ENCODE measurements at regions of chr19 and their contacts with region 1.

Region 1: GRCh38 chr19:46788262-46788967 is at the start of gene SLC1A5:
- DNase-seq: peak; percentile 94
- H3K4me3 ChIP-seq: peak within 1 kb of the TSS; percentile 85 to 89 (median 87)
- H3K27ac ChIP-seq: peak within 1 kb of the TSS; percentile 81
- H3K4me1 ChIP-seq: peaks cover 36% of the 10 kb centered on the region
- H3K27me3 ChIP-seq: no peaks in the 10 kb centered on the region
- CTCF ChIP-seq: no peak
- total RNA-seq, gene SLC1A5: 328 to 370 TPM

Region 2: DNA sequence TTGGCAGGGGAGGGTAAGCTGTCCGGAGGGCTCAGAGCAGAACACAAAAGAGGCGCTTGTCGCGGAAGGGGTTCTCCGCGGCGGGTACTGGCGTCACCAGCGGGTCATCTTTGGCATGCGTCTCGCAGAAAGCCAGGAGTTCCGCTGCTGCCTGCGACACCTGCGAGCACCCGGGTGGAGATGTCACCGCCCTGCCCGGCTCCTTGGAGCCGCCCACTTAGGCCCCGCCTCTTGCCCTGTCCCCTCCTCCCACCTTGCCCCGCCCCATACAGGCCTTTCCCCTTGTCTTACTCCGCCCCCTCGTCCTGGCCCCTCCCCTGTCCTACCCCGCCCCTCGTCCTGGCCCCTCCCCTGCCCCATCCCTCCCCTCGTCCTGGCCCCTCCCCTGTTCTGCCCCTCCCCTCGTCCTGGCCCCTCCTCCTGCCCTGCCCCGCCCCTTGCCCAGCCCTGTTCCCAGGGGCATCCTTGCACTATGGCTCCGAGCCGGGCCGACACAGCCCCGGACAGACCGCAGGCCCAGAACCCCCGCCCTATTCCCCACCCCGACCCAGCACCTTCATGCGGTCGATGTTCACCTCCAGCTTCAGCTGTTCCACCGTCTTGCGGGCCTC is 154.3 kb before region 1 on chr19:
- CTCF ChIA-PET with region 1: no interaction called
- dilution Hi-C with region 1: no loop called
- in situ Hi-C with region 1: no loop called
- intact Hi-C with region 1: no loop called
- DNase-seq: peak; percentile 85
- H3K4me3 ChIP-seq: peak overlapping the region; percentile 29 to 51 (median 39)
- H3K27ac ChIP-seq: no peak overlapping the region
- H3K4me1 ChIP-seq: peaks cover 31% of the 10 kb centered on the region
- H3K27me3 ChIP-seq: peaks cover 3% of the 10 kb centered on the region
- CTCF ChIP-seq: no peak

Region 3: DNA sequence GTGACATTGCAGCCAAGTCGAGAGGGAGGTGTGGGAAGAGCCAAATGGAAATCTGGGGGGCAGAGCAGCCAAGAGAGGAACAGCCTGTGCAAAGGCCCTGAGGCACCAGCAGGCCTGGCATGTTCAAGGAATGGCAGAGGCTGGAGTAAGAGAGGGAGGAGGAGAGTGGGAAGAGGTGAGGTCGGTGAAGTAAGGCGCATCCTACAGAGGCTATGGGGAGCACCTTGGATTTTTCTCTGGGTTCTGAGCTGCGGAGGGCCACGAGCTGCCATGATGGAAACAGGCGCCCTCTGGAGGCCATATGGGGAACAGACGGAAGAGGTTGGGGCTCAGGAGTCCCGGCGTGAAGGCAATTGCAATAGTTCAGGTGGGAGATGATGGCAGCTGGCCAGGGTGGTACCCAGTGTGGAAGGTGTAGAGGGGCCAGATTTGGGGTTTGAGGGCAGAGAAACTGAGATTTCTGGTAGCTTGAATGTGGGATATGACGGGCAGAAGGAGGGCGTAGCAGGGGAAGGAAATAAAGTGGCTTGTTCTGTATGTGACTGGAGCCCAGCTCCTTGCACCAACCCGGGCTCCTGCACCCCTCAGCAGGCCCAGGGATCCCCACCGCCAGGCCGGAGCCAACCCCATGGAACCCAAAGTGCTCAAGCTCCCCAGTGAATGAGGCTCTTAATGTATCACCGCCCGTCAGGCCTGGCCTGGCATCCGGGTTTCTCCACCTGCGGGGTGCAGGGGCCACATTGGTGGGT is 21.7 kb before region 1 on chr19:
- CTCF ChIA-PET with region 1: no interaction called
- dilution Hi-C with region 1: no loop called
- in situ Hi-C with region 1: no loop called
- intact Hi-C with region 1: loop called (anchors 1 kb)
- DNase-seq: no peak
- H3K4me3 ChIP-seq: no peak overlapping the region
- H3K27ac ChIP-seq: no peak overlapping the region
- H3K4me1 ChIP-seq: peaks cover 9% of the 10 kb centered on the region
- H3K27me3 ChIP-seq: no peaks in the 10 kb centered on the region
- CTCF ChIP-seq: peak; percentile 65 to 85

Region 4: DNA sequence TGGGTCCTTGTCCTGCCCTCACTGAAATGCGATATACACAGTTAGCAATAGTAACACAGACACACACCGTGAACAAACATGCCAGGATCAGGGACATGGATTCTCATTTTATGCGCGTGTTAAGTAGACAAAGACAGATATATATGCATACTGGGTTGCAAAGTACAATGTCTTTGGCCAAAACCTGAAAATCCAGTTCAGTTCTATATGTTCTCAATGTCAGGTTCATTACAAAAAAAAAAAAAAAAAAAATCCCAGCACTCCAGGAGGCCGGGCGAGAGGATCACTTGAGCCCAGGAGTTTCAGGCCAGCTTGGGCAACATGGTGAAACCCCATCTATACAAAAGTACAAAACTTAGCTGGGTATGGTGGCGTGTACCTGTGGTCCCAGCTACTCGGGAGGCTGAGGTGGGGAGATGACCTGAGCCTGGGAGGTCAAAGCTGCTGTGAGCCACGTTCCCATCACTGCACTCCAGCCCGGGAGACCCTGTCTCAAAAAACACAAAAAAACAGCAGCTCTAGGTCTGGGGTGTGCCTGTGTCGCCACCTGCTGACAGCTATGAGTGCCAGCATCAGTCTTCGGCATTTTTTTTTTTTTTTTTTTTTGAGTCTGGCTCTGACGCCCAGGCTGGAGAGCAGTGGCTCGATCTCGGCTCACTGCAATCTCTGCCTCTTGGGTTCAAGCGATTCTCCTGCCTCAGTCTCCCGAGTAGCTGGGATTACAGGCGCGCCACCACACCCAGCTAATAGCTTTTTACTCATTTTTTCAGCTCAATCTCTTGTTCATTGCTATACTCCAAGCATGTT is 51.9 kb after region 1 on chr19:
- CTCF ChIA-PET with region 1: interaction called, 5 read pairs
- dilution Hi-C with region 1: no loop called
- in situ Hi-C with region 1: loop called in 1 of 2 experiments (anchors 5 kb)
- intact Hi-C with region 1: loop called (anchors 1 kb)
- DNase-seq: peak; percentile 49
- H3K4me3 ChIP-seq: no peak overlapping the region
- H3K27ac ChIP-seq: no peak overlapping the region
- H3K4me1 ChIP-seq: peaks cover 10% of the 10 kb centered on the region
- H3K27me3 ChIP-seq: no peaks in the 10 kb centered on the region
- CTCF ChIP-seq: peak; percentile 77 to 89

Region 5: DNA sequence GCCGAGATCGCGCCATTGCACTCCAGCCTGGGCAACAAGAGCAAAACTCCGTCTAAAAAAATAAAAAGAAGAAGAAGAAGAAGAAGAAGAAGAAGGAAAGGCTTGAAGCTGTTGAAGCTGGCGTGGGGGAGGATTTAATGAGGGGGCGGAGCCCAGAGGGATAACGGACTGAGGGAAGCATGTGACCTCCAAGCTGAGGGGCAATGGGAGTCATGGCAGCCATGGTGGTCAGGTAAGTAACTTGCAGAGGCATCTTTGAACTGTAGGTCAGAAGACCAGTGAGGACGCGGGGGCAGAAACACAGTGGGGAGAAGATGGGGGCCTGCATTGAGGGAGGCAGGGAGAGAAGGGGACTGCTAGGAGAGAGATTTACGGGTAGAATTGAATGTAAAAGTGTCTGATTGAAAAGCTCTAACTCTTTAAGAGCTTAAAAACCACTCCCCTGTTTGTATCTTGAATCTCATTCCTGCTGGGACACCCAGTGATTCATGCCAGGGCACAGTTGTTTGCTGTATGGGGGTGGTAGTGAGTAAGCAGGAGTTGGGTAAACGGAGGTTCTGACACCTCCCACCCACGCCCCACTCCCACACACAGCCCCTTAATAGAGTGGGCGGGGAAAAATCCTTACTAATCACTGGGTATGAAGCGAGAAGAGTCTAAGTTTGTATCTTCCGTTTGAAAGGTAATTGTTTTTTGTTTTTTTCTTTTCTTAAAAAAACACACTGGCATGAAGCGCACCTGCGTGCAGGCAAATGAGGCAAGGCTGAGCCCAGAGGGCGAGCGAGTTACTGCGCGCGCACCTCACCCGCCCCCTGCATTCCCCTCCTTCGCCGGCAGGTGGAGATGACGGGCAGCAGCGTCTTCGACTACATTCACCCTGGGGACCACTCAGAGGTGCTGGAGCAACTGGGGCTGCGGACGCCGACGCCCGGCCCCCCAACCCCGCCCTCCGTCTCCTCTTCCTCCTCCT is 247.0 kb after region 1 on chr19:
- CTCF ChIA-PET with region 1: no interaction called
- dilution Hi-C with region 1: no loop called
- in situ Hi-C with region 1: no loop called
- intact Hi-C with region 1: loop called (anchors 5 kb)
- DNase-seq: peak; percentile 90
- H3K4me3 ChIP-seq: peak overlapping the region; percentile 47 to 79 (median 53)
- H3K27ac ChIP-seq: peak overlapping the region; percentile 68
- H3K4me1 ChIP-seq: peaks cover 14% of the 10 kb centered on the region
- H3K27me3 ChIP-seq: no peaks in the 10 kb centered on the region
- CTCF ChIP-seq: peak; percentile 80 to 94

Region 6: GRCh38 chr19:47256688-47257443 is 468.5 kb after region 1 on chr19:
- CTCF ChIA-PET with region 1: no interaction called
- dilution Hi-C with region 1: no loop called
- in situ Hi-C with region 1: no loop called
- intact Hi-C with region 1: loop called (anchors 10 kb)
- DNase-seq: peak; percentile 97
- H3K4me3 ChIP-seq: peak overlapping the region in 2 of 3 experiments; percentile 60 to 81
- H3K27ac ChIP-seq: peak overlapping the region; percentile 92
- H3K4me1 ChIP-seq: peaks cover 21% of the 10 kb centered on the region
- H3K27me3 ChIP-seq: no peaks in the 10 kb centered on the region
- CTCF ChIP-seq: no peak